ENCODE measurements at regions of chr6 and their contacts with region 1.

Region 1: DNA sequence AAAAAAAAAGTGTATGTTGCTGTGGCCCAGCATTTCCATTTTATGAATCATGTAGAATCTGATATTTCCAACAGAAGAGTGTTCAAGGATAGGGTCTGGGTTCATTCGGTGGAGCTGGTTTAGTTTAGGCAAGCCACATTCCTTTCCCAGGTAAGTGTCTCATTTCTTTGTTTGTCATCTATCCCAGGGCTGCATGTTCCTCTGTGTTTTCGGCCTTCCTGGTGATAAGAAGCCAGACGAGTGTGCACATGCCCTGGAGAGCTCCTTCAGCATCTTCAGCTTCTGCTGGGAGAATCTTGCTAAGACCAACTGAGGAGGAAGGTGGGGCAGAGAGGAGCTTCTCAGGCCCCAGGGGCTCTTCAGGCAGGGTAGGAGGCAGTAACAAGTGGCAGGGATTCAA is 38.3 kb downstream of the NFYA start:
- DNase-seq: no peak
- H3K4me3 ChIP-seq: no peak overlapping the region
- H3K27ac ChIP-seq: no peak overlapping the region
- H3K4me1 ChIP-seq: no peaks in the 10 kb centered on the region
- H3K27me3 ChIP-seq: no peaks in the 10 kb centered on the region
- CTCF ChIP-seq: no peak
- EP300 ChIP-seq: no peak
- POLR2A ChIP-seq: no peak

Region 2: GRCh38 chr6:40634429-40634828 is 476.6 kb before region 1 on chr6:
- in situ Hi-C with region 1: no loop called
- intact Hi-C with region 1: loop called (anchors 5 kb)
- DNase-seq: no peak
- H3K4me3 ChIP-seq: no peak overlapping the region
- H3K27ac ChIP-seq: no peak overlapping the region
- H3K4me1 ChIP-seq: no peaks in the 10 kb centered on the region
- H3K27me3 ChIP-seq: no peaks in the 10 kb centered on the region
- CTCF ChIP-seq: no peak
- EP300 ChIP-seq: no peak
- POLR2A ChIP-seq: no peak

Region 3: GRCh38 chr6:40874495-40874894 is 236.5 kb before region 1 on chr6:
- in situ Hi-C with region 1: no loop called
- intact Hi-C with region 1: no loop called
- DNase-seq: no peak
- H3K4me3 ChIP-seq: no peak overlapping the region
- H3K27ac ChIP-seq: no peak overlapping the region
- H3K4me1 ChIP-seq: no peaks in the 10 kb centered on the region
- H3K27me3 ChIP-seq: peaks cover 2% of the 10 kb centered on the region
- CTCF ChIP-seq: no peak
- EP300 ChIP-seq: no peak
- POLR2A ChIP-seq: no peak